Panc1 (cell line): ENCODE measurements at regions of chr2 and their contacts with region 1.

Region 1: GRCh38 chr2:206981739-206982340 is 42.5 kb downstream of the CPO start:
- DNase-seq: peak; percentile 38
- ATAC-seq: peak; percentile 89
- H3K4me3 ChIP-seq: no peak overlapping the region
- H3K27ac ChIP-seq: no peak overlapping the region
- H3K4me1 ChIP-seq: peaks cover 18% of the 10 kb centered on the region
- H3K27me3 ChIP-seq: no peaks in the 10 kb centered on the region
- CTCF ChIP-seq: peak; percentile 90

Region 2: DNA sequence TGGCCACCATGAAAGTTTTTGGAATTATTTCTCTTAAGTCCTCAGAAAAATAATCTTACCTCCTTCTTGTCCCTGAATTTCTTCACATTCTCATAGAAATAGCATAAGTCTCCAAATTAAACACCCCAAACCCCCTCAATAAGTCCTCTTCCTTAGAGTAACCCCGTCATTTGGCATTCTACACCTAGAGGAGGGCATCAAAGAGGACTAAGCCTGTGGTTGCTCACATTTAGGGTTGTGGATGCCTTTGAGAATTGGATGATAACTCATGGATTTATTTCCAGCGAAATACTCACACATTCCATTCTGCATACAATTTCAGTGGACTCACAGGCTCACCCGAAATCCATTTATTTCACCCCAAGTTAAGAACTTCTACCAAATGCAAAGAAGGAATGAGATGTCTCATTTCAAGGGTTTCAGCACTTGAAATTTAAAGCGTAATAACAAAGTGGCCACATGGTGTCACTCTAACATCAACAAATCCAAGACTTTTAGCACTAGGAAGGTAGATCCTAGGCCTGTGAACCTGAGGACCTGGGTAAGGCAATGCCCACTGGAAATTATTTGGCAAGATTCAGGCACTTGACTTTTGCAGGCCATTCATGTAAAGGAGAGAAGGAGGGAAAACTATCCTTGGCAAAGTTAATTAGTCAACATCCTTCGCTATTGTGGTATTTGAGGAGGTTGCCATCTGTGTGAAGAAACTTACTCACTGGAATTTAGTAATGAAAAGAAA is 288.3 kb before region 1 on chr2:
- CTCF ChIA-PET with region 1: no interaction called
- POLR2A ChIA-PET with region 1: no interaction called
- in situ Hi-C with region 1: no loop called
- intact Hi-C with region 1: loop called (anchors 10 kb)
- DNase-seq: peak; percentile 47
- ATAC-seq: peak; percentile 90
- H3K4me3 ChIP-seq: no peak overlapping the region
- H3K27ac ChIP-seq: no peak overlapping the region
- H3K4me1 ChIP-seq: no peaks in the 10 kb centered on the region
- H3K27me3 ChIP-seq: no peaks in the 10 kb centered on the region
- CTCF ChIP-seq: peak; percentile 72

Region 3: DNA sequence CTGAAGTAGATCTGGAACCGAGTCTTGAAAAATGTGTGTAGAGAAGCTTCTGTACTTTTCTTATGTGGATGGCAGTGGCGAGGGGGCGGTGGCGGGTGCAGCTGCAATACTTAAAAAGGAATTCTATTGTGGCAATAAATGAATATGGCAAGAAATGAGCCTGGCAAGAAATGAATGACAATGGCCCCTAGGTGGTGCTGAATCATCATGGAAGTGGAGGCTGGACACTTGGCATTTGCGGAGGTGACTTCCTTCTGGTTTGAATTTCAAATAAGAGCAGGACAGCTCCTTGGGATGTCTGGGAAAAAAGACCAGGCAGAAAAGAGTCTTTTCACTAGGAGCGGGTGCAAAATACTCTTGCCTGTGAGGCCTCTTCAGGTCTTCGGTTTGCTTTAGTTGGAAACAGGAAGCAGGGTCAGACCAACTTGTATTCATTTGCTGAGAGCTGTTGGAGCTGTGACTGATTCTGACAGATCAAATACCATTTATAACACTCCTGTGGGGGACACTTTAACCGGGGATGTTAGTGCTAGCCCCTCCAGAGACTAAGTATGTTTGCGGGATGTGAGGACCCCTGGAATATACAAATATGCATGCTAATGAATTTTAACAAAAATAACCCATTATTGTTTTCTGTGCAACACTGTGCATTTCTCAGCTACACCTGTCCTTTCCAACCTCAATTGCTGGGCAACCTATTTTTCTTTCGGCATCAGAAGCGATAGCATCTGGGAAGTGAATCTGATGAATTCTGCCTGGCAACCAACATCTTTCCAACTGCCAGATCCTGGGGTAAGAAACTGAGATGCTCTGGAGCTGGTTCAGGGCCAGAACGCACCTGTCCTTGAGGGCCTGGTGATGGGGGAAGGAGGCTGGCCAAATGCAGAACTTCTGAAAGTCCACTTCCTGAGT is 181.1 kb before region 1 on chr2:
- CTCF ChIA-PET with region 1: no interaction called
- POLR2A ChIA-PET with region 1: no interaction called
- in situ Hi-C with region 1: no loop called
- intact Hi-C with region 1: loop called (anchors 2 kb)
- DNase-seq: peak; percentile 67
- ATAC-seq: peak; percentile 89
- H3K4me3 ChIP-seq: no peak overlapping the region
- H3K27ac ChIP-seq: no peak overlapping the region
- H3K4me1 ChIP-seq: no peaks in the 10 kb centered on the region
- H3K27me3 ChIP-seq: no peaks in the 10 kb centered on the region
- CTCF ChIP-seq: peak; percentile 84

Region 4: GRCh38 chr2:207166039-207166348 is 184.2 kb after region 1 on chr2:
- CTCF ChIA-PET with region 1: no interaction called
- POLR2A ChIA-PET with region 1: no interaction called
- in situ Hi-C with region 1: no loop called
- intact Hi-C with region 1: loop called (anchors 5 kb)
- DNase-seq: peak; percentile 97
- ATAC-seq: peak; percentile 89
- H3K4me3 ChIP-seq: peak overlapping the region; percentile 72 to 74
- H3K27ac ChIP-seq: no peak overlapping the region
- H3K4me1 ChIP-seq: peaks cover 32% of the 10 kb centered on the region
- H3K27me3 ChIP-seq: no peaks in the 10 kb centered on the region
- CTCF ChIP-seq: no peak

Region 5: GRCh38 chr2:207311316-207312005 is 329.6 kb after region 1 on chr2:
- CTCF ChIA-PET with region 1: no interaction called
- POLR2A ChIA-PET with region 1: no interaction called
- in situ Hi-C with region 1: no loop called
- intact Hi-C with region 1: loop called (anchors 10 kb)
- DNase-seq: peak; percentile 73
- ATAC-seq: peak; percentile 51; the same call in 1 of the 2 replicates
- H3K4me3 ChIP-seq: no peak overlapping the region
- H3K27ac ChIP-seq: no peak overlapping the region
- H3K4me1 ChIP-seq: no peaks in the 10 kb centered on the region
- H3K27me3 ChIP-seq: no peaks in the 10 kb centered on the region
- CTCF ChIP-seq: peak; percentile 30; the same call in 1 of the 2 replicates

Region 6: GRCh38 chr2:207474863-207475485 is 493.1 kb after region 1 on chr2:
- CTCF ChIA-PET with region 1: interaction called, 3 read pairs
- POLR2A ChIA-PET with region 1: no interaction called
- in situ Hi-C with region 1: no loop called
- intact Hi-C with region 1: loop called (anchors 1 kb)
- DNase-seq: no peak
- ATAC-seq: no peak
- H3K4me3 ChIP-seq: no peak overlapping the region
- H3K27ac ChIP-seq: no peak overlapping the region
- H3K4me1 ChIP-seq: peaks cover 4% of the 10 kb centered on the region; the same call in 1 of the 2 replicates
- H3K27me3 ChIP-seq: no peaks in the 10 kb centered on the region
- CTCF ChIP-seq: peak; percentile 70; the same call in 1 of the 2 replicates